Activated naive CD4-positive, alpha-beta T cell treated with anti-CD3 and anti-CD28 coated beads for 36 hours (primary cell): ENCODE measurements at regions of chr4 and their contacts with region 1.

Region 1: DNA sequence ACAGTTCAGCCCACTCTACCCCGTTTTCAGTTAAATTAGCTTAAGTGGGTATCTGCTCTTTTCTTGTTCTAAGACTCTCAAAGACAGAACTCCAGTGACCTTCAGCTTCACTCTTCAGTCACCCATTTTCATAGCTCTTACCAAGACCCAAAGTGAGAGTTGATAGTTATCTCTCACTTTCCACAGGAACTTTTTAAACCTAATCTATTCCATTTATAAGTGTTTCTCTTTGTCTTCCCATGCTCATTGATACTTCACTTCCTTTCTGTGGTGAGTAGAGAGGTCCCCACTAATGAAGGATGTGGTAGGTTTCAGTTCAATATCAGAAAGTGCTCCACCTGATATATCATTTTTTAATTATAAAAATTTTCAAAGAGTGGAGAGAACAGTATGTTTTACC is 33.4 kb downstream of the COX18 start:
- DNase-seq: no peak
- H3K4me3 Mint-ChIP-seq: no peak overlapping the region
- H3K27ac Mint-ChIP-seq: no peak overlapping the region
- H3K4me1 Mint-ChIP-seq: peaks cover 13% of the 10 kb centered on the region
- H3K27me3 Mint-ChIP-seq: peaks cover 2% of the 10 kb centered on the region

Region 2: DNA sequence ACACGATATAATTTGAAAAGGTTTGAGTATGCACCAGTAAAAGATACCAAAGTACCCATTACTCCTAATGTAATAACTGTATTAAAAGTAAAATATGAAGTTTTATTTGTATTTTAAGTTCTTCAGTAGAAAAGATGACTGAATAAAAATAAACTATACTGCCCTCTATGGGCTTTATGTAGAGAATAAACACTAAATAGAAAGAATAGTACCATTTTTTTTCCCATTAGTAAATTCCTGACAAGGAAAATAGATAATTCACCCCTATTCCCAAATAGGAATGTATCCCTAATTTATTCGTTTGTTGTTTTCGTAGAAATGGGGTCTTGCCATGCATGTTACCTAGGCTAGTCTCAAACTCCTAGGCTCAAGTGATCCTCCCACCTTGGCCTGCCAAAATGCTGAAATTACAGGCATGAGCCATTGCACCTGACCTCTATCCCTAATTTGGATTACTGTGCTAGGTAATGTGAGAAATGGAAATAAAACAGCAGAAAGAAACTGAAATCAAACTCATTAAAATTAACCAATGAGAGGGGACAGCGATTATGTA is 106.9 kb after region 1 on chr4:
- CTCF ChIA-PET with region 1: no interaction called
- intact Hi-C with region 1: loop called (anchors 2 kb)
- DNase-seq: no peak
- H3K4me3 Mint-ChIP-seq: no peak overlapping the region
- H3K27ac Mint-ChIP-seq: no peak overlapping the region
- H3K4me1 Mint-ChIP-seq: peaks cover 8% of the 10 kb centered on the region
- H3K27me3 Mint-ChIP-seq: no peaks in the 10 kb centered on the region

Region 3: DNA sequence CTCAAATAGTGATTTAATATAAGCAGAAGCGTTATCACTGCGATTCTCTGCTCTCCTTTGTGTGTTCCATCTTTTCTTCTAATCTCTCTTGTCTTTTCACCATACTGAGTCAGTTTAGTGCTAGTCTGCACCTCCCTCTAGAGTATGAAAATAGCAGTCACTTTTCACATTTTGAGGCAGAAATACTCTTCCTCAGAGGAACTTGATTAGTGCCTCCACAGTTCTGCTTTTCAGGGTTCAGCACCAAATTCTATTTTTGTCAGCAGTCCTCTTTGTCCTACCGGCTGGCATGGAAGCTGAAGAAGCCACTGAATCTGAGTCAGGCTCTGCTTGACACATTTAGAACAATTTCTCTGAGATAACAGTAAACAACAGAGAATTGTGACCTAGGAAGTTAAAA is 272.2 kb after region 1 on chr4:
- CTCF ChIA-PET with region 1: interaction called, 3 read pairs
- intact Hi-C with region 1: loop called (anchors 5 kb)
- DNase-seq: no peak
- H3K4me3 Mint-ChIP-seq: no peak overlapping the region
- H3K27ac Mint-ChIP-seq: no peak overlapping the region
- H3K4me1 Mint-ChIP-seq: no peaks in the 10 kb centered on the region
- H3K27me3 Mint-ChIP-seq: no peaks in the 10 kb centered on the region

Region 4: GRCh38 chr4:73446336-73446938 is 410.3 kb after region 1 on chr4:
- CTCF ChIA-PET with region 1: no interaction called
- intact Hi-C with region 1: loop called (anchors 1 kb)
- DNase-seq: peak; percentile 4
- H3K4me3 Mint-ChIP-seq: no peak overlapping the region
- H3K27ac Mint-ChIP-seq: no peak overlapping the region
- H3K4me1 Mint-ChIP-seq: no peaks in the 10 kb centered on the region
- H3K27me3 Mint-ChIP-seq: peaks cover 11% of the 10 kb centered on the region